Activated CD4-positive, alpha-beta memory T cell treated with anti-CD3 and anti-CD28 coated beads for 36 hours (primary cell): ENCODE measurements at regions of chr10 and their contacts with region 1.

Region 1: DNA sequence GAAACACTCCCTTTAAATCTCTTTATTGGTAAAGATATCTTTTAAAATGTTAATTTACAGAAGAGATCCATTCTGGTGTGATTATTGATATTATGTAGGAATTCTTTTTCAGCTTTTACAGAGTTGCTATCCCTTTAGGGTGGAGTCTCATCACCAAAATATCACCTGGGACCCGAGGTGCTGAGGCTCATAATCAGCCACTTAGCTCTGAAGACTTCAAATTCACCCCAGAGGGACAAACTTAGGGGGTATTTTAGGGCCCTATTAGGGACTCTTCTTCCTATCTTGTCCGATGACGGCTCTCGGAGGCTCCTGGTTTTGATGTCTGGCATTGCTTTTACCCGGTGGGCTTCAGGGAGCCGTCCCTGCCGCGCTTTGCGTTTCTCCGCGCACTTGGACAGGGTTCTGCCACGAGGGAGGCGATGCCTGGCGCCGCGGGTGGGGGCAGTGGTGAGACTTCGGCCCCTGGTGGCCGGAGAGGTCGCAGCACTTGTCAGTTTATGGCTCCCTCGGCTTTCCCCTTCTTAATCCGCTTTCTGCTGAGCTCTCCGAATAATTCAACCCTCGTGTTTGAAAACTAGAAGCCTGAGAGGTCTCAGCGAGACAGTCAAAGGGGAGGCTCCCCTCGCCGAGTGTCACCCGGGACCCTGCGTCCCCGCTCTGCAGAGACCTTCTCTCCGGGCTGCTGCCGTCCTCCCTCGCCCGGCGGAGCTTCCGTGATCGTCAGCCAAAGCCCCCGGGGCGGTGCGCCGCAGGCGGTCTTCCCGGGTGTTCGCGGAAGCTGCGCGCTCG is 27.8 kb downstream of the RBM20 start:
- DNase-seq: peak; percentile 81
- H3K4me3 Mint-ChIP-seq: peak overlapping the region; percentile 78
- H3K27ac Mint-ChIP-seq: no peak overlapping the region
- H3K4me1 Mint-ChIP-seq: peaks cover 2% of the 10 kb centered on the region
- H3K27me3 Mint-ChIP-seq: no peaks in the 10 kb centered on the region

Region 2: GRCh38 chr10:110641256-110641655 is 30.7 kb before region 1 on chr10:
- CTCF ChIA-PET with region 1: interaction called, 11 read pairs
- POLR2A ChIA-PET with region 1: no interaction called
- intact Hi-C with region 1: no loop called
- DNase-seq: peak; percentile 67
- H3K4me3 Mint-ChIP-seq: no peak overlapping the region
- H3K27ac Mint-ChIP-seq: no peak overlapping the region
- H3K4me1 Mint-ChIP-seq: peaks cover 25% of the 10 kb centered on the region
- H3K27me3 Mint-ChIP-seq: peaks cover 38% of the 10 kb centered on the region

Region 3: DNA sequence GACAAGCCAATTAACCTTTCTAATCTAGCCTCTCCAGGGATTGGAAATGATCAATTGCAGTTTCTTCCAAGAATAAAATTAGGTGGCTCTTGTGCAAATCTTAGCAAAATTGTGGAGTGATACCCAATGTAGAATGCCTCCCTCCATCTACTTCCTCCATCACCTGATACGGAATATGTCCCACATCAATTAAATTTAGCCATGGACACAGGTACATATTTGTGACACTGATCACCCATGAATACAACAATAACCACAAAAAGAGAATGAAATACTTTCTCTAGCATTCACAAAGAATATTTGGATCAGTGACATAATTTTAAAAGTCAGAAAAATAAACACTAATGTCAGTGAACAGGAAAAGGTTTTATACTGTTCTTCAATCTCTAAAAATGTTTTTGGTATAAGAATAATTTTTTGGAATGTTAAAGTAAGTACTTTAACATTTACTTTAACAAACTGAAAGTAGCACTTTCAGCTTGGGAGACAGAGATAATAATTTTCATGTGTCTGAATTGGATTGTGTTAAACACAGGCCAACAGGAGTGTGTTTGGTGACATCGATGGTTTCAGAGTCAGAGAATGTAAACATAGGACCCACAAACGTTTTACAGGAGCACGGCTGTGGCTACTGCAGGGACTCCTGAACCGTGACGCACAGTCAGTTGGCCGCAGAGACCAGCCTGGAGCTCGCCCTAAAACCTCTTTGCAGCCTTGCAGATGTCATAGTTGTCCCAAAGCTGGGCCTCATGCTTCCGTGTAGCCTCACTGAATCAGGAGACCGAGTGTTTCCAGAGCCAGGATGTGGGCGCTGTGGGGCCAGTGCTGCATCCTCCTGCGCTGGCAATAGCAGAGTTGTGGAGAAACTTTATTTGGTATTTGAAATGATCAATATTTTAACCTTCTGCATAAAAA is 20.7 kb before region 1 on chr10:
- CTCF ChIA-PET with region 1: interaction called, 4 read pairs
- POLR2A ChIA-PET with region 1: no interaction called
- intact Hi-C with region 1: loop called (anchors 2 kb)
- DNase-seq: peak; percentile 43
- H3K4me3 Mint-ChIP-seq: no peak overlapping the region
- H3K27ac Mint-ChIP-seq: no peak overlapping the region
- H3K4me1 Mint-ChIP-seq: peaks cover 3% of the 10 kb centered on the region
- H3K27me3 Mint-ChIP-seq: peaks cover 29% of the 10 kb centered on the region